AG04449 (cell line): ENCODE measurements at regions of chr14 and their contacts with region 1.

Region 1: GRCh38 chr14:76911473-76911872 is 85.3 kb downstream of the LRRC74A start:
- DNase-seq: no peak
- H3K4me3 ChIP-seq: no peak overlapping the region
- CTCF ChIP-seq: no peak

Region 2: GRCh38 chr14:76181546-76181945 is 729.9 kb before region 1 on chr14:
- CTCF ChIA-PET with region 1: no interaction called
- POLR2A ChIA-PET with region 1: no interaction called
- DNase-seq: no peak
- H3K4me3 ChIP-seq: no peak overlapping the region
- CTCF ChIP-seq: no peak

Region 3: GRCh38 chr14:76924371-76925096 is 13.1 kb after region 1 on chr14:
- CTCF ChIA-PET with region 1: interaction called, 17 read pairs
- POLR2A ChIA-PET with region 1: no interaction called
- DNase-seq: no peak
- H3K4me3 ChIP-seq: no peak overlapping the region
- CTCF ChIP-seq: no peak

Region 4: GRCh38 chr14:76956316-76957090 is 45.0 kb after region 1 on chr14:
- CTCF ChIA-PET with region 1: interaction called, 59 read pairs
- POLR2A ChIA-PET with region 1: no interaction called
- DNase-seq: peak; percentile 41
- H3K4me3 ChIP-seq: peak overlapping the region; percentile 36
- CTCF ChIP-seq: peak; percentile 4

Region 5: GRCh38 chr14:77023001-77023996 is 111.8 kb after region 1 on chr14:
- CTCF ChIA-PET with region 1: interaction called, 110 read pairs
- POLR2A ChIA-PET with region 1: no interaction called
- DNase-seq: no peak
- H3K4me3 ChIP-seq: peak overlapping the region; percentile 92
- CTCF ChIP-seq: peak; percentile 36

Region 6: GRCh38 chr14:77097700-77098528 is 186.4 kb after region 1 on chr14 and contains the start of gene CIPC:
- CTCF ChIA-PET with region 1: interaction called, 43 read pairs
- POLR2A ChIA-PET with region 1: no interaction called
- DNase-seq: peak; percentile 88
- H3K4me3 ChIP-seq: peak within 1 kb of the TSS; percentile 100
- CTCF ChIP-seq: no peak